Breast epithelium (tissue), 4 donors: ENCODE measurements at regions of chr1 and their contacts with region 1.

Region 1: DNA sequence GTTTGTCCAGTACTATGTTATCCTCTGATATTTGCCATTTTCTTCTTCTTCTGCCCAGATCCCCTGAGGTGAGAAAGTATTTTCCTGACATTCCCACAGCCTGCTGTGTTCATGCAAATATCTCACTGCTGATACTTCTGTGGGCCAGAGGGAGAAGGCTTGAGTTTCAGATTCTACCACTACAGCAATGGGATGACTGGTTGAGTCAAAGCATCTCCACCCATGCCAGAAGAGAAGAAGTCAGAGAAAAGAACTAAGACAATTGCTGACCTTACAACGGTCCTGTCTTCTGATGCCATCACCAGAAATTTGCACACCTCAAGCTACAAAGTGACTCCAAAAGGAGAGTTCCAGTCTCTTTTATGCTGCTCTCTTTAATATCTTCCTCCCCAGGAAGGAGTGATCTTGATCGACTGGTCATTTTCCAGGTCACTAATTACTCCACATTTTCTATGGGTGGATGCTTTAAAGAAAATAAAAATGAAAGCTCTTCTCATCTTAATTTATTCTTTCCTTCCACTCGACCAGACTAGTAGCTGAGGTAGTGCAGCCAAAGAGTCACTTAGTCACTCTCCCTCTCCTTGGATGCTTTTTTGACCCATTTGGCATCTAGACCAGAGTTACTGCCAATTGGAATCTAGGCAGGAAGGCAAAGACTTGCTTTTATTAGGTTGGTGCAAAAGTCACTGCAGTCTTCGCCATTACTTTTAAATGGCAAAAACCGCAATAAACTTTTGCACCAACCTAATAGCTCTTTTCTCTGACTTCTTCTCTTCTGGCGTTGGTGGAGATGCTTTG is 195.1 kb downstream of the PTPRC start:
- DNase-seq: no peak
- H3K4me3 ChIP-seq: no peak overlapping the region
- H3K27ac ChIP-seq: no peak overlapping the region
- H3K4me1 ChIP-seq: no peaks in the 10 kb centered on the region
- H3K27me3 ChIP-seq: no peaks in the 10 kb centered on the region
- CTCF ChIP-seq: no peak
- POLR2A ChIP-seq: no peak

Region 2: GRCh38 chr1:198788561-198789064 is 45.3 kb before region 1 on chr1:
- intact Hi-C with region 1: loop called (anchors 2 kb)
- DNase-seq: no peak
- H3K4me3 ChIP-seq: no peak overlapping the region
- H3K27ac ChIP-seq: no peak overlapping the region
- H3K4me1 ChIP-seq: no peaks in the 10 kb centered on the region
- H3K27me3 ChIP-seq: no peaks in the 10 kb centered on the region
- CTCF ChIP-seq: no peak
- POLR2A ChIP-seq: no peak

Region 3: GRCh38 chr1:198798923-198799386 is 35.0 kb before region 1 on chr1:
- intact Hi-C with region 1: no loop called
- DNase-seq: no peak
- H3K4me3 ChIP-seq: no peak overlapping the region
- H3K27ac ChIP-seq: no peak overlapping the region
- H3K4me1 ChIP-seq: no peaks in the 10 kb centered on the region
- H3K27me3 ChIP-seq: no peaks in the 10 kb centered on the region
- CTCF ChIP-seq: no peak
- POLR2A ChIP-seq: no peak

Region 4: DNA sequence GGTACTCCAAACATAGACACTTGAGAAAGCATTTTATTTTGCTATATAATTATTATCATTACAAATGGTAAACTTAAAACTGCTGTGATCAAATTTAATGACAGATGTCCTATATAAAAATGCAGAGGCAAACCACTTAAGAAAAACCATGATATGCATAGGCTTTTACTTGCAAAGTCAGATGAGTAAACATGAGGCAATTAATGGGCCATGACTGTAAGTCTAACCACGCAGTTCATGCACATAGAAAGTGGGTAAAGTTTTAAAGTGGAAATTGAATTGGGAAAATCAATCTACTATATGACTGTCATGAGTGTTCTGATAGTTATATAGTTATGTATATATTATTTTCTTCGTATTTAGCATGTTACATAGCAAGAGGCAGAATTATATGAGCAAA is 24.1 kb after region 1 on chr1:
- intact Hi-C with region 1: no loop called
- DNase-seq: no peak
- H3K4me3 ChIP-seq: no peak overlapping the region
- H3K27ac ChIP-seq: no peak overlapping the region
- H3K4me1 ChIP-seq: no peaks in the 10 kb centered on the region
- H3K27me3 ChIP-seq: no peaks in the 10 kb centered on the region
- CTCF ChIP-seq: no peak
- POLR2A ChIP-seq: no peak

Region 5: GRCh38 chr1:199815947-199816346 is 982.0 kb after region 1 on chr1:
- intact Hi-C with region 1: no loop called
- DNase-seq: no peak
- H3K4me3 ChIP-seq: no peak overlapping the region
- H3K27ac ChIP-seq: no peak overlapping the region
- H3K4me1 ChIP-seq: no peaks in the 10 kb centered on the region
- H3K27me3 ChIP-seq: no peaks in the 10 kb centered on the region
- CTCF ChIP-seq: no peak
- POLR2A ChIP-seq: no peak